ENCODE measurements at regions of chr15 and their contacts with region 1.

Region 1: DNA sequence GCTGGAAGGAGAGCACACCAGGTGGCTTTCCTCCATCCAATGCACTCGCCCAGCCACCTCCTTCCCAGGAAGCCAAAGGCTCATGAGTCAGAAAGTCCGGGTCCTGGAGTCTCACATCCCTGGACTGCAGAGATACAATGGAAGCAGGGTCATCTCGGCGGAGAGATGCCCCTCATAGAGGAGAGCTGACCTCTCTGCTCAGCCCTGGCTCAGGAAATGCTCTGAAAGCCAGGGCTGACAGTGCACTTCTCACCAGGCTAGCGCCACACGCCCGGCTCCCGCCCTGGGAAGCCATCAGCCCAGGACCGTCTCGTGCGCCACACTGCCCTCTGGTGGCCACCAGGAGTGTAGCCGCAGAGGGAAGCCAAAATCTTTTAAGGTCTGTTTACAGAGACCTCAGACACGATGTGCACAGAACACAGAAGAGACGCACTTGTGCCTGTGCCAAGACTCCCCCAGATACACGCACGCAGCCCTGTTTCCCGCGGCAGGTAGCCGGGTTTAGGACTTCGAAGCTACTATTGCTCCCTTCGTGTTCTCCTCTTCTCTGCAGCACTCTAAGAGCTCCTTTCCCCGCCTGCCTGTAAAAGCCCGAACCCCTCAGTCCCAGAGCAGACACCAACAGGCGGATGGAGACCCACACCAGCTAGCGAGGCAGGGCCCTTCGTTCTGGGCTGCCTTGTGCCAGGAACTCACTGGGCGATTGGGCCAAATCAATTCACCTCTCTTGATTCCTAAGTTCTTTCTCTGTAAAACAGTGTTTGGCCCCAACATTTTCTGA is 9.7 kb downstream of the NTRK3 start:
- DNase-seq: peak; percentile 58 to 64 (median 61)
- H3K4me3 ChIP-seq: no peak overlapping the region
- H3K4me3 Mint-ChIP-seq: peak overlapping the region in 3 of 8 donors; percentile 1 to 23 (median 17)
- H3K27ac ChIP-seq: no peak overlapping the region
- H3K27ac Mint-ChIP-seq: no peak overlapping the region
- H3K4me1 ChIP-seq: no peaks in the 10 kb centered on the region
- H3K4me1 Mint-ChIP-seq: peaks cover 4 to 11% (median 6%) of the 10 kb centered on the region in 4 donors
- H3K27me3 ChIP-seq: no peaks in the 10 kb centered on the region
- H3K27me3 Mint-ChIP-seq: peaks cover 13 to 15% of the 10 kb centered on the region in 2 donors

Region 2: DNA sequence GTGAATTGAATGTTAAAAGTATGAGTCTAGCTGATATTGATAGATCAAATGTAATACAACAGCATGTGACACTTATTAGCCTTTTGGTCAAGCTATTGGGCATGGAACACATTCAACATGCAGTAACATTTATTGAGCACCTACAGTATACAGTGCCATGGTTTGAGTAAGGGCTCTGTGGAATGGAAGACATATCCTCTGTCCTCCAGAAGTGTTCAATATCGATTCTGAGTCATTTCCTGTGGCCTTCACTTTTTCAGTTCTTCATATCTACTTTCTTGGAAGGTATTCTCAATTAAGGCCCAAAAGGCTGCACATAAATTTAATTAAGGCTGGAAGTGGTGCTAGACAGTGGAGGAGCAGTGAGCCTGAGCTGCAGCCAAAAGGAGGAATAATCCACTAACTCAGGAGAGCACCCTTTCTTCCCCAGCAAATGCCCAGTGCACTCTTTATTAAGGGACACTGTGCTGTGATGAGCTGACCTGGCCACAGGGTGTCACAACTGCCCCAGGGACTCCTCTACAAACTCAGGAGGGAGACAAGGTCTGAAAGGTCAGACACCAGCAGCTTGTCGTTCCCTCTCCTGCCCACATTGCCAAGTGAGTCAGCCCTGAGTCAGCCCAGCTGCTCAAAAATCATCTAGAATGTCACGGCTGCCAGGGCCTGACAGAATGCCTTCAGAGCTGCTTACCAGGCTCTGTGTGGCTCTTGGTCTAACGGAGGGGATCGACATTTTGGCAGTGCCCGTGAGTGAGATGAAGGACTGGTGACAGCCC is 1622.4 kb before region 1 on chr15:
- CTCF ChIA-PET with region 1: interaction called, 4 read pairs
- POLR2A ChIA-PET with region 1: no interaction called
- intact Hi-C with region 1: loop called (anchors 10 kb)
- DNase-seq: peak; percentile 30 to 47 (median 38)
- H3K4me3 ChIP-seq: no peak overlapping the region
- H3K4me3 Mint-ChIP-seq: no peak overlapping the region
- H3K27ac ChIP-seq: no peak overlapping the region
- H3K27ac Mint-ChIP-seq: peak overlapping the region in 2 of 7 donors; percentile 4 to 43
- H3K4me1 ChIP-seq: peaks cover 13% of the 10 kb centered on the region
- H3K4me1 Mint-ChIP-seq: peaks cover 16 to 34% (median 28%) of the 10 kb centered on the region in 4 donors
- H3K27me3 ChIP-seq: no peaks in the 10 kb centered on the region
- H3K27me3 Mint-ChIP-seq: no peaks in the 10 kb centered on the region

Region 3: DNA sequence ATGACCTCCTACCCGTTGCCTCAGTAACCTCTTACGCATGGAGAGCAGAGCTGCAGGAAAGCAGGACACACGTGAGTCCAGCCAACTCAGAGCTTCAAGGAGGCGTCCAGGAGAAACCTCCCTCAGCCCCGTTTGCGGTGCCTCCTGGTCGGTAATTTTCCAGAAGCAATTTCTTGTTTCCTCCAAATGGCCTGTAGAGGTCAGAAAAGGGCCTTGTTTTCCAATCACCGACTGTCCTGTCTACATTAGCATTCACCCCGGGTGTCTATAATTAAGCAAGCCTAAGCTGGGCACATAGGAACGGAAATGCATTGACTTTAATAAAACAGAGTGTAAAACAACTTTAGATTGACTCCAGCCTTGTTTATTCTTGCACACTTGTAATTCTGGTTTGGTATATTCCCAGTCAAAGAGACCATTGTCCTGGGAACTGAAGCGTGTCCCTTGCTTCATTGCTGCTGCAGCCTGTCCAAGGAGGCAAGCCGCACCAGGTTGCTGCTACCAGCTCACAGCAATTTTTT is 1331.0 kb before region 1 on chr15:
- CTCF ChIA-PET with region 1: no interaction called
- POLR2A ChIA-PET with region 1: no interaction called
- intact Hi-C with region 1: loop called (anchors 5 kb)
- DNase-seq: no peak
- H3K4me3 ChIP-seq: no peak overlapping the region
- H3K4me3 Mint-ChIP-seq: no peak overlapping the region
- H3K27ac ChIP-seq: no peak overlapping the region
- H3K27ac Mint-ChIP-seq: no peak overlapping the region
- H3K4me1 ChIP-seq: no peaks in the 10 kb centered on the region
- H3K4me1 Mint-ChIP-seq: no peaks in the 10 kb centered on the region
- H3K27me3 ChIP-seq: no peaks in the 10 kb centered on the region
- H3K27me3 Mint-ChIP-seq: peaks cover 5 to 8% of the 10 kb centered on the region in 2 donors

Region 4: GRCh38 chr15:88166082-88166993 is 80.5 kb before region 1 on chr15:
- CTCF ChIA-PET with region 1: no interaction called
- POLR2A ChIA-PET with region 1: no interaction called
- intact Hi-C with region 1: no loop called
- DNase-seq: no peak
- H3K4me3 ChIP-seq: no peak overlapping the region
- H3K4me3 Mint-ChIP-seq: no peak overlapping the region
- H3K27ac ChIP-seq: no peak overlapping the region
- H3K27ac Mint-ChIP-seq: no peak overlapping the region
- H3K4me1 ChIP-seq: no peaks in the 10 kb centered on the region
- H3K4me1 Mint-ChIP-seq: no peaks in the 10 kb centered on the region
- H3K27me3 ChIP-seq: no peaks in the 10 kb centered on the region
- H3K27me3 Mint-ChIP-seq: peaks cover 0 to 17% of the 10 kb centered on the region in 2 donors

Region 5: GRCh38 chr15:88231909-88232644 is 14.8 kb before region 1 on chr15:
- CTCF ChIA-PET with region 1: interaction called, 13 read pairs
- POLR2A ChIA-PET with region 1: no interaction called
- intact Hi-C with region 1: no loop called
- DNase-seq: no peak
- H3K4me3 ChIP-seq: no peak overlapping the region
- H3K4me3 Mint-ChIP-seq: no peak overlapping the region
- H3K27ac ChIP-seq: no peak overlapping the region
- H3K27ac Mint-ChIP-seq: no peak overlapping the region
- H3K4me1 ChIP-seq: no peaks in the 10 kb centered on the region
- H3K4me1 Mint-ChIP-seq: no peaks in the 10 kb centered on the region
- H3K27me3 ChIP-seq: no peaks in the 10 kb centered on the region
- H3K27me3 Mint-ChIP-seq: peaks cover 16 to 19% of the 10 kb centered on the region in 2 donors

Region 6: GRCh38 chr15:88258093-88258641 is 11.3 kb after region 1 on chr15:
- CTCF ChIA-PET with region 1: interaction called, 22 read pairs
- POLR2A ChIA-PET with region 1: no interaction called
- intact Hi-C with region 1: no loop called
- DNase-seq: no peak
- H3K4me3 ChIP-seq: no peak overlapping the region
- H3K4me3 Mint-ChIP-seq: peak overlapping the region in 5 of 8 donors; percentile 15 to 92 (median 84)
- H3K27ac ChIP-seq: no peak overlapping the region
- H3K27ac Mint-ChIP-seq: no peak overlapping the region
- H3K4me1 ChIP-seq: peaks cover 12% of the 10 kb centered on the region
- H3K4me1 Mint-ChIP-seq: peaks cover 12 to 28% (median 18%) of the 10 kb centered on the region in 4 donors
- H3K27me3 ChIP-seq: peaks cover 6% of the 10 kb centered on the region
- H3K27me3 Mint-ChIP-seq: peaks cover 56 to 60% of the 10 kb centered on the region in 2 donors

Region 7: GRCh38 chr15:88274553-88275460 is 28.0 kb after region 1 on chr15:
- CTCF ChIA-PET with region 1: interaction called, 42 read pairs
- POLR2A ChIA-PET with region 1: no interaction called
- intact Hi-C with region 1: no loop called
- DNase-seq: peak in 4 of 5 donors; percentile 9 to 30 (median 20)
- H3K4me3 ChIP-seq: no peak overlapping the region
- H3K4me3 Mint-ChIP-seq: no peak overlapping the region
- H3K27ac ChIP-seq: no peak overlapping the region
- H3K27ac Mint-ChIP-seq: peak overlapping the region in 1 of 7 donors; percentile 58
- H3K4me1 ChIP-seq: no peaks in the 10 kb centered on the region
- H3K4me1 Mint-ChIP-seq: no peaks in the 10 kb centered on the region
- H3K27me3 ChIP-seq: no peaks in the 10 kb centered on the region
- H3K27me3 Mint-ChIP-seq: peaks cover 8 to 18% of the 10 kb centered on the region in 2 donors

Region 8: DNA sequence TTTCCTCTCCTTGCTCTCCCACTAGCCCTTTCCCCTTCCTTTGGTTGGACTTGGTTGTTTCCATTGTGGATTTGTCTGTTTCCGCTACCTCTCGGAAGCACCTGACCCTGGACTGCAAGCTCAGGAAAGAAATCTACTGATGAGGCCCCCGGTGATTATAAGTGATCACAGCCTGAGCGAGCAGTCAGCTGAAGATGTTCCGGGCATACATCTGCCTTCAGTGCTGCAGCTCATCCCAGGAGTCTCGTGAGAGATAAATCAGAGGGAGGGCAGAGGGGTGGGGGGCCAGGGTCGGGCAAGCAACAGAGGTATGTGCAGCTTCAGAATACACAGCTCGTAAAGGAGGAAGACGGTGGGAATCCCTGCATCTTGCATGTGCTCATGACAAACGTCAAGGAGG is 118.3 kb after region 1 on chr15:
- CTCF ChIA-PET with region 1: no interaction called
- POLR2A ChIA-PET with region 1: no interaction called
- intact Hi-C with region 1: no loop called
- DNase-seq: no peak
- H3K4me3 ChIP-seq: no peak overlapping the region
- H3K4me3 Mint-ChIP-seq: no peak overlapping the region
- H3K27ac ChIP-seq: no peak overlapping the region
- H3K27ac Mint-ChIP-seq: no peak overlapping the region
- H3K4me1 ChIP-seq: no peaks in the 10 kb centered on the region
- H3K4me1 Mint-ChIP-seq: no peaks in the 10 kb centered on the region
- H3K27me3 ChIP-seq: no peaks in the 10 kb centered on the region
- H3K27me3 Mint-ChIP-seq: peaks cover 1 to 2% of the 10 kb centered on the region in 2 donors

Region 9: DNA sequence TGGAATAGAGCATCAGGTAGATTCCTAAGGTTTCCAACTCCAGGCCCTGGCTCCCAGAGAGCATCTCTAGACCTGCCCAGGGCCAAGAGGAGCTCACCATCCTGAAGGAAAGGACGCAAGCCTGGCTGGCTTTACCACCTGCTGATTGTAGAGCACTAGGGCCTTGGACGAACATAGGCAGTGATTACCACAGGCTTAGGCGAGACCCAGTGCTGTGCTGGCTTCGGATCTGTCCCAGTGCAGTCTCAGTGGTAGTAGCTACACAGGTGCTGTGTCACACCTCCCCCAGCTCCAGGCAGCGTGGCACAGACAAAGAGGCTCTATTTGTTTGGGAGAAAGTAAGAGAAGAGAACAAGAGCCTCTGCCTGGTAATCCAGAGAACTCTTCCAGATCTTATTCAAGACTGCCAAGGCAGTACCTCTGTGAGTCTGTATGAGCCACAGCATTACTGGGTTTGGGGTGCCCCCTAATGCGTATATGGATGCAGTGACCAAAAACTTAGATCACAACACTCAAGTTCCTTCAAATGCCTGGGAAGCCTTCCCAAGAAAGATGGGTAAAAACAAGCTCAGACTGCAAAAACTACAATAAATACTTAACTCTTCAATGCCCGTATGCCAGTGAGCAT is 417.4 kb after region 1 on chr15:
- CTCF ChIA-PET with region 1: interaction called, 3 read pairs
- POLR2A ChIA-PET with region 1: no interaction called
- intact Hi-C with region 1: loop called (anchors 10 kb)
- DNase-seq: peak; percentile 63 to 68 (median 66)
- H3K4me3 ChIP-seq: no peak overlapping the region
- H3K4me3 Mint-ChIP-seq: no peak overlapping the region
- H3K27ac ChIP-seq: no peak overlapping the region
- H3K27ac Mint-ChIP-seq: peak overlapping the region; percentile 22 to 84 (median 64)
- H3K4me1 ChIP-seq: peaks cover 17% of the 10 kb centered on the region
- H3K4me1 Mint-ChIP-seq: peaks cover 16 to 36% (median 24%) of the 10 kb centered on the region in 4 donors
- H3K27me3 ChIP-seq: no peaks in the 10 kb centered on the region
- H3K27me3 Mint-ChIP-seq: peaks cover 6 to 9% of the 10 kb centered on the region in 2 donors

Measured in CD4-positive, alpha-beta memory T cell (primary cell).